ENCODE measurements at regions of chr1 and their contacts with region 1.

Region 1: DNA sequence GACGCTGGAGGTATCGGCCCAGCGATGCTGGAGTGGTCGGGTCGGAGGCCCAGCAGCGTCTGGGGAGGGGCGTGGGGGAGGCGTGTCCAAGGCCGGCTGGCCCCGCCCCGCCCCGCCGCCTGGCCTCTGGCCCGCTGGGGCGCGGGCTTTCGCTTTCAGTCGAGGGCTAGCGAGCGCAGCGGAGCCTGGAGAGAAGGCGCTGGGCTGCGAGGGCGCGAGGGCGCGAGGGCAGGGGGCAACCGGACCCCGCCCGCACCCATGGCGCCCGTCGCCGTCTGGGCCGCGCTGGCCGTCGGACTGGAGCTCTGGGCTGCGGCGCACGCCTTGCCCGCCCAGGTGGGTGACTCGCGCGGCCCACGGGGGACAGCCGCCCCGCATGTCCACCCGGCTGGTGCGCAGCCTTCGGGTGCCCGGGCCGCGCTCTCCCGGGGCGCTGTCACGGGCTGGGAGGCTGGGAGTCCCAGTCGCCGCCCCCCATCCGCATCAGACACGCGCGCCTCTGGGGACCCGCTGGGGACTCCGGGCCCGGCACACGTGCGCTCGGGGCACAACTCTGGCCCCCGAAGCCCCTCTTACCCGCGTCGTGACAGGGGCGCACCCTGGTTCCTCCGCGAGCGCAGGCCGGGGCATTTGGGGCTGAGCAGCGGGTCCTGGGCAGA is at the start of gene TNFRSF1B:
- DNase-seq: peak; percentile 79
- ATAC-seq: peak; percentile 67
- H3K4me3 Mint-ChIP-seq: peak within 1 kb of the TSS; percentile 100
- H3K27ac Mint-ChIP-seq: peak within 1 kb of the TSS; percentile 94
- H3K4me1 Mint-ChIP-seq: peaks cover 75% of the 10 kb centered on the region
- H3K27me3 Mint-ChIP-seq: no peaks in the 10 kb centered on the region
- total RNA-seq, gene TNFRSF1B: 294 to 370 TPM

Region 2: DNA sequence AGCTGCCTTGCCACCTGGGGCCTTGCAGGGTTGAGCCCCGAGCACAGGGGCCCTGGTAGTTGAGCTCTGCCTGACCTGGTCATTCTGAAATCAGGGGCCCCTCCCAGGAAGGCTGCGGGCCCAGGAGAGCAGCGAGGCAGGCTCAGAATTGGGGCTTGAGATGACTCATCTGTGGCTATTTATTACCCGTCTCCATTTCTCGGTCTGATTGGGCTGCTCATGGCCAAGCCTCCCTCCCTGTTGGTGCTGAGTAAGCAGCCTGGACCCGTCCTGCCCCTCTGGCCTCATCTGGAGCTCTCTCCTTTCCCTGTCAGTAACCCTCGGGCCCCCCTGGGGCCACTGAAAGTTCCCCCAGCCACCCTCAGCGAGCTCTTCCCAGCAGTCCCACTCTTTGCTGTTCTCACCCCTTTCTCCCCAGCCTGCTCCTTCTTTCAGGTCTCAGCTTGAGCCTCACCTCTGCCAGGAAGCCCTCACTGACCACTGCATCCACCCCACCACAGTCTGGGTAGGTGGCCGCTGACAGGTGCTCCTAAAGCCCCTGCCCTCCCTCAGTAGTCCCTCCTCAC is 114.9 kb before region 1 on chr1:
- CTCF ChIA-PET with region 1: no interaction called
- DNase-seq: peak; percentile 88
- ATAC-seq: peak; percentile 67
- H3K4me3 Mint-ChIP-seq: peak overlapping the region; percentile 23
- H3K27ac Mint-ChIP-seq: peak overlapping the region; percentile 82
- H3K4me1 Mint-ChIP-seq: peaks cover 63% of the 10 kb centered on the region
- H3K27me3 Mint-ChIP-seq: no peaks in the 10 kb centered on the region

Region 3: DNA sequence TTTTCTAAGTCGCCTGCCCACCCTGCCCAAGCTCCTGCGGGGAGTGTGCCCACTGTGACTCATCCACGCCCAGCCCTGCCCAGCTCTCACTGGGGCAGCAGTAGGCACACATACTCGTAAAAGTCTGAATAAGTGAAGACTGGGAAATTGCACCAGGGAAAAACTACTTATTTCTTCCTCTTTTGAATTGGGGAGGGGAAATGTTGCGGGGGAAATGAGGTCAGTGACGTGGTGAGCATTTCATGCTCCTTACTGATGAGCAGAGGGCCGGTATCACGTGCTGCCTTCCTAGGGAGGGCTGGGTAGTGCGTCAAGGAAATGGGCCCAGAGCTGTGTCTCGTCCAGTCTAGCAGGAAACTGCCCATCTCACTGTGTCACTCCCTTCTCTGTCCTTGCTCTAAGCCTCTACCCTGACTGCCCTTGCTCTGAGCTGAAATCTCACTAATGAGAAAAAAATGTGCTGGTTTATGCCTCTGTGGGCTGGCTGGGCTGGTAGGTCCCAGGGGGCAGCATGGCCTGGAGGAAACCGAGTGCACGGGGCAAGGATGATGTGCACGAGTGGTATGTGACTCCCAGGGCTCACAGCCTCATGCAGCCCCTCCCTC is 13.7 kb before region 1 on chr1:
- CTCF ChIA-PET with region 1: interaction called, 36 read pairs
- DNase-seq: no peak
- ATAC-seq: no peak
- H3K4me3 Mint-ChIP-seq: no peak overlapping the region
- H3K27ac Mint-ChIP-seq: peak overlapping the region; percentile 99
- H3K4me1 Mint-ChIP-seq: peaks cover 92% of the 10 kb centered on the region
- H3K27me3 Mint-ChIP-seq: no peaks in the 10 kb centered on the region

Region 4: DNA sequence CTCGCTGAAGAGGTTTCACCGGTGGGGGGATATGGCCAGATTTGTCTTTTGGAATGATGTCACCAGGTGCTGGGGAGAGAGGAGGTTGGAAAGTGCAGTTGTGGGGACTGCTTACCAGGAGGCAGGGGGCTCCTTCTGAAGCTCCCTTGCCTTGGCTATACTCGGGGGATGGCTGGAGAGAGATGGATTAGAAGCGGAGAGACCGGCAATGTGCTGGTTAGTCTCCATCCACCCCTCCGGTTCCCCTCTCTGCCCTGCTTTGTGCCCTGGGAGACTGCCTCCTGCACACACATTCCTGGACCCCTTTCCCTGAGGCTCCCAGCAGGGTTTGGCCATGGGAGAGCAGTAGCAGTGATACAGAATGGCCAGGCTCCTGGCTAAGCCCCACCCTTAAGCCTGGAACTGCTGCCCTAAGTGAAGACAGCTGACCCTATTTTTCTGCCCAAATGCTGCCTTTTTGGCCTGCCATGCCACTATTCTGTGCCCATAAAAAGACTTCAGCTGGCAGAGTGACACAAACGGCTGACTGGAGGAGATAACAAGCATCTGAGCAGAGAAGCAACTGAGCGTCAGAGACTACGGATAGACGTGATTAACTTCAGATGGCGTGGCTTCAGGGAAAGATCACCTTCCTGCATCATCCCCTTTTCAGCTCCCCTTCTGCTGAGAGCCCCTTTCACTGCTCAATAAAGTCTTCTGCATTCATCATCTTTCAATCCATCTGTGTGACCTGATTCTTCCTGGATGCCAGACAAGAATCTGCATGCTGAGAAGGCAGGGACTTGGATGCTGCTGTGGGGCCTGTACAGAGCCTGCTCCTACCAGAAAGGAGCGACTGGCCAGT is 48.4 kb after region 1 on chr1:
- CTCF ChIA-PET with region 1: no interaction called
- DNase-seq: no peak
- ATAC-seq: no peak
- H3K4me3 Mint-ChIP-seq: no peak overlapping the region
- H3K27ac Mint-ChIP-seq: no peak overlapping the region
- H3K4me1 Mint-ChIP-seq: peaks cover 6% of the 10 kb centered on the region
- H3K27me3 Mint-ChIP-seq: peaks cover 6% of the 10 kb centered on the region

Measured in activated CD8-positive, alpha-beta memory T cell treated with anti-CD3 and anti-CD28 coated beads, Interleukin-2, amount 10 ng/mL, durations not matched to agents 7 days and 5 days (primary cell).